ENCODE measurements at regions of chr14 and their contacts with region 1.

Region 1: DNA sequence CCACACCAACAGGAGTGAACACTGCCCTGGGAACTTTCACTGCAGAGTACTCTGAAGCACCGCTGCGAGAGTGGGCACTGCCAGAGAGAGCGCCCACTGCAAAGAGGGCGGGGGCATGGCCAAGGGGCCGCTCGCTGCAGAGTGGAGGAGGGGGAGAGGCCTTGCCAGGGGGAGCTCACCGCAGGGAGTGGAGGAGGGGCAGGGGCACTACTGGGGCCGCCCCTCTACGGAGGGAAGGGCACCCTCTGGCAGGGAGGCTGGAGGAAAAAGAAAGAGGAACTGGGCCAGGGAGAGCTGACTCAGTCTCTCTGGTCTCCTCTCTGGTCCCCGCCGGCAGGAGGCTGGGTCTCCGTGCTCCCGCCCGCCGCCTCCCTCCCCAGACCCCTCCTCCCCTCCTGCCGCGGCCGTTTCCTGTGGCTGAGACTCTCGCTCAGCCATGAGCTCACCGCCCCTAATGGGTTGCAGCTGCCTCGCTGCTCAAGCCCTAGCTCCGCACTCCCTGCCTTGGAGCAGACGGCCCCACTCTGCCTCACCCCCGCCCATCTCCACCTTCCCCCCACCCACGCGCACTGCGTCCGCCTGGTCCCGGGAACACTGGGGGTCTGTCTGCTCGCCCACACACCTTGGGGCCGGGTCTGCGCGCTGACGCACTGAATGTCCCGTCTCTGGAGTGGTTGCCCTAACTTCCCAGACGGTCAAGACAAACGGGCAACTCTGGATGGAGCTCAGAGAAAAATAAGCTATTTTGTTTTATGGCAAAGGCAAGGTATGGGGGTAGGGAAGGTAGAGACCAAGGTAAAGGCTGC is 1.3 kb downstream of the ARHGEF40 start:
- DNase-seq: peak; percentile 88
- ATAC-seq: peak; percentile 46
- H3K4me3 Mint-ChIP-seq: peak overlapping the region; percentile 89
- H3K27ac Mint-ChIP-seq: peak overlapping the region; percentile 80
- H3K4me1 Mint-ChIP-seq: peaks cover 33% of the 10 kb centered on the region
- H3K27me3 Mint-ChIP-seq: peaks cover 4% of the 10 kb centered on the region; the same call in 1 of the 2 replicates
- CTCF ChIP-seq: no peak

Region 2: GRCh38 chr14:20632682-20633428 is 438.6 kb before region 1 on chr14:
- CTCF ChIA-PET with region 1: no interaction called
- POLR2A ChIA-PET with region 1: no interaction called
- DNase-seq: peak; percentile 78
- ATAC-seq: peak; percentile 60
- H3K4me3 Mint-ChIP-seq: peak overlapping the region; percentile 93
- H3K27ac Mint-ChIP-seq: peak overlapping the region; percentile 78; the same call in 1 of the 2 replicates
- H3K4me1 Mint-ChIP-seq: peaks cover 14% of the 10 kb centered on the region
- H3K27me3 Mint-ChIP-seq: peaks cover 49% of the 10 kb centered on the region
- CTCF ChIP-seq: no peak

Region 3: GRCh38 chr14:20998664-20999366 is 72.6 kb before region 1 on chr14 and contains the start of gene SLC39A2:
- CTCF ChIA-PET with region 1: interaction called, 17 read pairs
- POLR2A ChIA-PET with region 1: interaction called, 8 read pairs
- DNase-seq: peak; percentile 63
- ATAC-seq: peak; percentile 90
- H3K4me3 Mint-ChIP-seq: peak within 1 kb of the TSS; percentile 32
- H3K27ac Mint-ChIP-seq: peak within 1 kb of the TSS; percentile 55
- H3K4me1 Mint-ChIP-seq: peaks cover 18% of the 10 kb centered on the region
- H3K27me3 Mint-ChIP-seq: no peaks in the 10 kb centered on the region; the same call in 1 of the 2 replicates
- CTCF ChIP-seq: no peak
- total RNA-seq, gene SLC39A2: 0.14 TPM in 1 of 3 replicates, not detected in the others

Region 4: GRCh38 chr14:21084988-21085853 is 13.8 kb after region 1 on chr14:
- CTCF ChIA-PET with region 1: interaction called, 72 read pairs
- POLR2A ChIA-PET with region 1: interaction called, 23 read pairs
- DNase-seq: no peak
- ATAC-seq: no peak
- H3K4me3 Mint-ChIP-seq: no peak overlapping the region
- H3K27ac Mint-ChIP-seq: no peak overlapping the region
- H3K4me1 Mint-ChIP-seq: peaks cover 18% of the 10 kb centered on the region
- H3K27me3 Mint-ChIP-seq: no peaks in the 10 kb centered on the region
- CTCF ChIP-seq: no peak

Region 5: GRCh38 chr14:21098076-21098891 is 26.9 kb after region 1 on chr14 and contains the start of gene ZNF219:
- CTCF ChIA-PET with region 1: interaction called, 165 read pairs
- POLR2A ChIA-PET with region 1: interaction called, 74 read pairs
- DNase-seq: peak; percentile 82
- ATAC-seq: peak; percentile 21
- H3K4me3 Mint-ChIP-seq: peak within 1 kb of the TSS; percentile 90
- H3K27ac Mint-ChIP-seq: peak within 1 kb of the TSS; percentile 97
- H3K4me1 Mint-ChIP-seq: peaks cover 75% of the 10 kb centered on the region
- H3K27me3 Mint-ChIP-seq: no peaks in the 10 kb centered on the region
- CTCF ChIP-seq: no peak
- total RNA-seq, gene ZNF219: 149 to 154 TPM (median 149 TPM) in 3 replicates

Region 6: GRCh38 chr14:21136024-21136423 is 64.6 kb after region 1 on chr14:
- CTCF ChIA-PET with region 1: interaction called, 13 read pairs
- POLR2A ChIA-PET with region 1: no interaction called
- DNase-seq: no peak
- ATAC-seq: no peak
- H3K4me3 Mint-ChIP-seq: no peak overlapping the region
- H3K27ac Mint-ChIP-seq: no peak overlapping the region
- H3K4me1 Mint-ChIP-seq: peaks cover 24% of the 10 kb centered on the region
- H3K27me3 Mint-ChIP-seq: no peaks in the 10 kb centered on the region
- CTCF ChIP-seq: peak; percentile 41

Region 7: GRCh38 chr14:21257394-21257909 is 186.0 kb after region 1 on chr14:
- CTCF ChIA-PET with region 1: no interaction called
- POLR2A ChIA-PET with region 1: no interaction called
- DNase-seq: no peak
- ATAC-seq: no peak
- H3K4me3 Mint-ChIP-seq: peak overlapping the region; percentile 36
- H3K27ac Mint-ChIP-seq: peak overlapping the region; percentile 87
- H3K4me1 Mint-ChIP-seq: peaks cover 54% of the 10 kb centered on the region
- H3K27me3 Mint-ChIP-seq: no peaks in the 10 kb centered on the region
- CTCF ChIP-seq: no peak